Breast epithelium (tissue), 4 donors: ENCODE measurements at regions of chr4 and their contacts with region 1.

Region 1: GRCh38 chr4:62070291-62070852 is 870.2 kb downstream of the ADGRL3 start:
- DNase-seq: no peak
- H3K4me3 ChIP-seq: no peak overlapping the region
- H3K27ac ChIP-seq: no peak overlapping the region
- H3K4me1 ChIP-seq: no peaks in the 10 kb centered on the region
- H3K27me3 ChIP-seq: no peaks in the 10 kb centered on the region
- CTCF ChIP-seq: no peak
- POLR2A ChIP-seq: no peak

Region 2: DNA sequence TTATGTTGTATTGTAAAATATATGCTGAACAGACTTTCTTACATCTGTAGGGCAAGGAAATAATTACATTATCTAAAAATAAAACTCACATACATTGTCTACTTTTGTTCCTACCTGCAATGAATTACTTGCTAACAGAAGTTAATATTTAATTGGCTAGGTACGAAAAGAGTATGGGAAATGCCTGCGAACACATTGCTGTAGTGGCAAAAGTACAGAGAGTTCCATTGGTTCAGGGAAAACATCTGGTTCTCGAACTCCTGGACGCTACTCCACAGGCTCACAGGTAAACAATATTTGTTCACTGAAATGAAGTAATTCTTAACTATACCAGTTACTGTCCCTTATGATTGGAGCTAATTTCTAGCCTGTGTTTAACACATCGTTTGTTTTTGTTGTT is 32.8 kb before region 1 on chr4:
- intact Hi-C with region 1: loop called (anchors 2 kb)
- DNase-seq: no peak
- H3K4me3 ChIP-seq: no peak overlapping the region
- H3K27ac ChIP-seq: no peak overlapping the region
- H3K4me1 ChIP-seq: no peaks in the 10 kb centered on the region
- H3K27me3 ChIP-seq: no peaks in the 10 kb centered on the region
- CTCF ChIP-seq: no peak
- POLR2A ChIP-seq: no peak